B cell (primary cell): ENCODE measurements at regions of chr6 and their contacts with region 1.

Region 1: GRCh38 chr6:145814501-145815308 is at the start of gene FBXO30:
- DNase-seq: peak; percentile 93
- ATAC-seq: peak; percentile 91
- H3K4me3 ChIP-seq: peak within 1 kb of the TSS; percentile 60 to 94 (median 90)
- H3K4me3 Mint-ChIP-seq: peak within 1 kb of the TSS; percentile 96
- H3K27ac ChIP-seq: peak within 1 kb of the TSS; percentile 76 to 89
- H3K27ac Mint-ChIP-seq: peak within 1 kb of the TSS; percentile 96
- H3K4me1 ChIP-seq: peaks cover 26 to 32% of the 10 kb centered on the region in 2 donors
- H3K4me1 Mint-ChIP-seq: peaks cover 44% of the 10 kb centered on the region
- H3K27me3 ChIP-seq: no peaks in the 10 kb centered on the region
- H3K27me3 Mint-ChIP-seq: no peaks in the 10 kb centered on the region
- CTCF ChIP-seq: peak; percentile 18
- total RNA-seq, gene FBXO30: 9.7 and 10.2 TPM in 2 replicates

Region 2: DNA sequence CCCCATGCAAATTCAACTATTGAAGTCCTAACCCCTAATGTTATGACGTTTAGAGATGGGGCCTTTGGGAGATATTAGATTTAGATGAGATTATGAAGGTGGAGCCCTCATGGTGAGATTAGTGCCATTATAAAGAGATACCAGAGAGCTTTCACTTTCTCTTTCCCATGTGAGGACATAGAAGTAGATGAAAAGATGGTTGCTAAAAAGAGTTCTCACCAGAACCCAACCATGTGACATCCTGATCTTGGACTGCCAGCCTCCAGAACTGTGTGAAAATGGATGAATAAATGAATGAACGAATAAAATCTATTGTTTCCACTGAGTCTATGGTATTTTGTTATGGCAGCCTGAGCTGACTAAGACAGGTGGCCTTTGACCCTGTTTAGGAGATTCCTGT is 50.5 kb after region 1 on chr6:
- CTCF ChIA-PET with region 1: interaction called, 3 read pairs
- POLR2A ChIA-PET with region 1: no interaction called
- intact Hi-C with region 1: loop called (anchors 1 kb)
- DNase-seq: peak; percentile 30
- ATAC-seq: no peak
- H3K4me3 ChIP-seq: peak overlapping the region in 1 of 5 experiments; percentile 6
- H3K4me3 Mint-ChIP-seq: peak overlapping the region; percentile 41
- H3K27ac ChIP-seq: peak overlapping the region; percentile 60 to 85
- H3K27ac Mint-ChIP-seq: peak overlapping the region; percentile 82
- H3K4me1 ChIP-seq: peaks cover 45 to 46% of the 10 kb centered on the region in 2 donors
- H3K4me1 Mint-ChIP-seq: peaks cover 51% of the 10 kb centered on the region
- H3K27me3 ChIP-seq: no peaks in the 10 kb centered on the region
- H3K27me3 Mint-ChIP-seq: no peaks in the 10 kb centered on the region
- CTCF ChIP-seq: no peak